ENCODE measurements at regions of chr6 and their contacts with region 1.

Region 1: DNA sequence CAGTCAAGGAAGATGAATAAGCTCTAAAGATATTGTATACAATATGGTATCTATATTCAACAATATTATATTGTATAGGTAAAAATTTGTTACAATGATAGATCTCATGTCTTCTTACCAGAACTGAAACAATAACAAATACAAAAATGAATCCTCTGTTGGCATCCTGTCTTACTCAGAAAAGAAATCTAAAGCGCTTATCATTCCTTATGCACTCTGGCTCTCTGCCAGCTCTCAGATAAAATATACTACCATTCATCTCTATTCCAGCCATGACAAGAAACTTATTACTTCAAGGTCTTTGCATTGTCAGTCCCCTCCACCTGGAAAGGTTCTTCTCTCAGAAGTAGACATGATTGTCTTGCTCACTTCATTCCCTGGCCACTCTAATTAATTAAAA is 138.6 kb downstream of the THEMIS start:
- DNase-seq: no peak
- H3K4me3 ChIP-seq: no peak overlapping the region
- H3K27ac ChIP-seq: no peak overlapping the region
- H3K4me1 ChIP-seq: no peaks in the 10 kb centered on the region
- H3K27me3 ChIP-seq: peaks cover 2% of the 10 kb centered on the region
- CTCF ChIP-seq: no peak

Region 2: DNA sequence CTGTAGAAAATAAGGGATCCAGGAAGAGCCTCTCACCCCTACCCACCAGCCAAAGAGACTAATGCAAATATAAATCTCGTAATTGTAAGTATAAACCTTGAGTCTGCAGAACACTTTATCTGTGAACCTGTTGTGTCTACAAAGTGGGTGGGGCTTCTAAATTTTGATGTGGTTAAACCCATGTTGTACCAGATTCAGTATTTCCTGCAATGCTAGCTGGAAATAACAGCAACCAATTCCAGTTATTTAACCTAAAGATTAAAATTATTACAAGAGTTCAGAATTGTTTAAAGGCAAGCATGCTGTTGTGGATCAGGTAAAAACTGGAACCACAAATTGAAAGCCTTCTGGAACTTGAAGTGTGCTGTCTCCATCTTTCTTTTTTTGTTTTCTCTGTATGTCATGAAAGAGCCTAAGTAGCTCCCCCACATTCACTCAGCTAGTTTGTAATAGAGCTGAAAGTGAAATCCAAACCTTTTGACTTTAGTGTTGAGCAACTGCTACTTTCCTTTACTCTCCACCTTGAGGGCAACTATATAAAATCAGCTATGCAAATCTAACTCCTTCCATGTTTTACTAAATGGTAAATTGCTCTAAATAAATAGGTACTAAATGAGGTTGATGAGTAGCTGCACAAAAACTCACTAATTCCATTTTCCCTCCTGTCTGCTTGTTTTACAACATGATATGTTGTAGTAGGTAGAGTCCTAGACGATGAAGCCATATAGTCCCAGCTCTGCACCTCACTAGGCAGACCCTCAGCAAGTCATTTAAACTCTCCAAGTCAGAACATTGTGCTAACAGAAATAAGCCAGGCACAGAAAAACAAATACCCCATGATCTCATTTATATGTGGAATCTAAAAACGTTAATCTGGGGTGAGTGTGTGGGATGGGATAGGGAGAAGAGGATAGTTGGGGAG is 156.5 kb after region 1 on chr6:
- CTCF ChIA-PET with region 1: no interaction called
- dilution Hi-C with region 1: no loop called
- in situ Hi-C with region 1: no loop called
- intact Hi-C with region 1: no loop called
- DNase-seq: no peak
- H3K4me3 ChIP-seq: no peak overlapping the region
- H3K27ac ChIP-seq: no peak overlapping the region
- H3K4me1 ChIP-seq: peaks cover 7% of the 10 kb centered on the region
- H3K27me3 ChIP-seq: peaks cover 2% of the 10 kb centered on the region
- CTCF ChIP-seq: no peak

Region 3: DNA sequence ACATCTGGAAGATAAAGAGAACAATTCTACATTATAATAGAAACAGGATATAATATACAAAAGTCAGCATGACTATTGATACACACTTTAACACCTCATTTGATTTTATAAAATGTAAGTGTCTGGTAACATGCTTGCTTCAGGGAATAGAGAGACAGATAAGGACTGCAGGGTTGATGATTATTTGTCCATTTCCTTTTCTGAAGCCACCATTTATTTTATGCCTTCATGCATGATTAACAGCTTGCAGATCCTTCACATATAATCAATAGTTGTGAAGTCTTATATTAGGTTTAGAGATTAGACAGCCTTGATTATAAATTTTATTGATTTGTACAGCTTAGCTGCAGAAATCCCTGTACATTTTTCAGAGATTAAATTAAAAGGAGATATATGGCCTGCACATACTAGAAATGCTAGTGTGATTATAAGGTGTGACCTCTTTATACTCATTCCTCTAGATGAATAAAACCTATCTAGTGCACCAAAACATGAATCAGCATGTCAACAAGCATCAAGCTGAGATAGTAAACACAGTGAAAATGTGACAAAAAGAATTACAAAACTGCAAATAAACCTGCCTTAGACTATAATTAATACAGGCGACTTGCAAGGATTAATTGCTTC is 337.4 kb after region 1 on chr6:
- CTCF ChIA-PET with region 1: no interaction called
- dilution Hi-C with region 1: loop called (anchors 10 kb)
- in situ Hi-C with region 1: no loop called
- intact Hi-C with region 1: no loop called
- DNase-seq: no peak
- H3K4me3 ChIP-seq: no peak overlapping the region
- H3K27ac ChIP-seq: no peak overlapping the region
- H3K4me1 ChIP-seq: no peaks in the 10 kb centered on the region
- H3K27me3 ChIP-seq: no peaks in the 10 kb centered on the region
- CTCF ChIP-seq: no peak

Measured in mammary epithelial cell (primary cell).